ENCODE measurements at regions of chr6 and their contacts with region 1.

Region 1: GRCh38 chr6:14804785-14805210 is 441.1 kb upstream of the JARID2 start:
- DNase-seq: peak; percentile 90 to 93
- ATAC-seq: peak; percentile 72 to 90 (median 84)
- H3K4me3 ChIP-seq: no peak overlapping the region
- H3K27ac ChIP-seq: peak overlapping the region in 6 of 10 donors; percentile 13 to 54 (median 34)
- H3K4me1 ChIP-seq: peaks cover 6 to 28% (median 19%) of the 10 kb centered on the region in 9 donors
- H3K27me3 ChIP-seq: no peaks in the 10 kb centered on the region
- CTCF ChIP-seq: peak in 1 of 9 donors; percentile 31

Region 2: GRCh38 chr6:14883921-14884320 is 79.1 kb after region 1 on chr6:
- intact Hi-C with region 1: loop called in 1 of 10 experiments (anchors 2 kb)
- DNase-seq: no peak
- ATAC-seq: no peak
- H3K4me3 ChIP-seq: no peak overlapping the region
- H3K27ac ChIP-seq: peak overlapping the region in 2 of 10 donors; percentile 3 to 6
- H3K4me1 ChIP-seq: peaks cover 5 to 69% (median 63%) of the 10 kb centered on the region in 9 donors
- H3K27me3 ChIP-seq: no peaks in the 10 kb centered on the region
- CTCF ChIP-seq: no peak

Measured in heart right ventricle (tissue), 16 donors.